Colonic mucosa (tissue), 4 donors: ENCODE measurements at regions of chr20 and their contacts with region 1.

Region 1: DNA sequence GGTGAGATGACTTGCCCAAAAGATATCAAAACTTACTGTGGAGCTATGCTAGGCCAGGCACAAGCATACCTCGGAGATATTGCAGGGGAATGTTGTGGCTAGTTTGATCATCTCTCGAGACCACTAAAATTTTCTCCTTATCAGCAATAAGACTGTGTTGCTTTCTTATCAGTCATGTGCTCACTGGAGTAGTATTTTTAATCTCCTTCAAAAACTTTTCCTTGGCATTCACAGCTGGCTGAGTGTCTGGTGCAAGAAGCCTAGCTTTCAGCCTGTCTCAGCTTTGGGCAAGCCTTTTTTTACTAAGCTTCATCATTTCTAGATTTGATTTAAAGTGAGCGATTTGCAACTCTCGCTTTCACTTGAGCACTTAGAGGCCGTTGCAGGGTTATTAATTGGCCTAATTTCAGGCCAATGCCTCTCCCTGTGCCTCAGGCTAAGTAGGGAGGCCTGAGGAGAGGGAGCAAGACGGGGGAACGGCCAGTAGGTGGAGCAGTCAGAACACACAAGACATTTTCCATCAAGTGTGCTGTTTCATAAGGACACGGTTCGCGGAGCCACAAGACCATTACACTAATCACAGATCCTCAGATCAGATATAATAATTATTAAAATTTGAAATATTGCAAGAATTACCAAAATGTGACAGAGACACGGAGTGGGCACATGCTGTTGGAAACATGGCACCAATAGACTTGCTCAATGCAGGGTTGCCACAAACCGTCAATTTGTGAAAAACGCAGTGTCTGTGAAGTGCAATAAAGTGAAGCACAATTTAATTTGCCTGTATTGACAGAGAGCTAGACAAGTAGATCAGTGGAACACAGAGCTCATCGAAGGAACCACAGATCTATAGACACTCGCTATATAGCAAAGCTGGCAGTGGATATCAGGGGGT is 106.8 kb upstream of the SIRPG start:
- DNase-seq: peak; percentile 86
- H3K4me3 ChIP-seq: no peak overlapping the region
- H3K27ac ChIP-seq: no peak overlapping the region
- H3K4me1 ChIP-seq: no peaks in the 10 kb centered on the region
- H3K27me3 ChIP-seq: no peaks in the 10 kb centered on the region
- CTCF ChIP-seq: peak; percentile 86

Region 2: DNA sequence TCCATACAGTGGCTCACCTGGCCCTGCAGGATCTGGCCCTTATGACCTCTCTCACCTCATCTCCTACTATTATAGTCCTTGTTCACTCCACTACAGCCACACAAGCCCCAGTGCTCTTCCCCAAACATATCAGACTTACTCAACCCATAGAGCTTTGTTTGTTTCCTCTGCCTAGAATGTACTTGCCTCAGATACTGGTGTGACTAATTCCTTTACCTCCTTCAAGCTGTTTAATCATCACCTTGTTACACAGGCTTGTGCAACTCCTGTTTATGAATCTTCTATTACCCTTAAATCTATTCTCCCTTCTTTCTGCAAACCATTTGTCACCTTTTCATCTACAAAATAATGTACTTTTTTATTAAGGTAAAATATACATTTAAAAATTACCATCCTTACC is 1673.7 kb before region 1 on chr20:
- intact Hi-C with region 1: no loop called
- DNase-seq: no peak
- H3K4me3 ChIP-seq: no peak overlapping the region
- H3K27ac ChIP-seq: no peak overlapping the region
- H3K4me1 ChIP-seq: no peaks in the 10 kb centered on the region
- H3K27me3 ChIP-seq: no peaks in the 10 kb centered on the region
- CTCF ChIP-seq: no peak

Region 3: DNA sequence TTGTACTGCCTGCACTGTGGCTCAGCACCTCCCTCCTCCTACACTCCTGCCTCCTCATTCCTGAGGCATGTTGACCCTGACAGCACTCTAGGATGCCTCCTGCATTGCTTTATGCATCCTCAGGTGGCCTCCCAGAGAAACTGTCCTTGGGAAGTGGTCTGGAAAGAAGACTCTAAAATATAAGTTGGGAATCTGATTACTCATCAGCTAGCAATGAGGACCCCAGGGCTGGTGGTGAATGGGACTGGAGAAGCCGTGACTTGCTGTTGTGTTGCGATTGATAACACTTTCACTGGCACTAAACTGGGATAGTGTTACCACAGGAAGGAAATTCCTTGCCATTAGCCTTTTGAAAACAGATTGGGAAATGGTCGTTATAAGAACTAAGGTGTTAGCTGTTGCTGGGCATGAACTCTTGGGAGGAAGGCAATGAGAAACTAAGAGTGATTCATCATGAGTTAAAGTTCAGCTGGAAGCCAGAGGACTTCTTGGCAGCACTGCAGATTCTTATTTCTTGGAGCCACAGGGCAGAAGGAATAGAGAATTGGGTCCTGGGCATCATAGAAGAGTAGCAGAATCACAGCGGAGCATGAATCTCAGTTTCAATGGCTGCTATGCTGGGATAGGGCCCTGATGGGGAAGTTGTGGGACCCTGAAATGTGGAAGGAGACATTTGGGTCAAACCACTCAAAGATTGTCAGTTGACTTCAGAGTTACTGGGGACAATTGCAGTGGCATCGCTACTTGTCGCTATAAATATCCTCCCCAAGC is 196.8 kb before region 1 on chr20:
- intact Hi-C with region 1: no loop called
- DNase-seq: no peak
- H3K4me3 ChIP-seq: no peak overlapping the region
- H3K27ac ChIP-seq: no peak overlapping the region
- H3K4me1 ChIP-seq: no peaks in the 10 kb centered on the region
- H3K27me3 ChIP-seq: no peaks in the 10 kb centered on the region
- CTCF ChIP-seq: no peak

Region 4: GRCh38 chr20:2093159-2093781 is 328.9 kb after region 1 on chr20:
- intact Hi-C with region 1: loop called (anchors 10 kb)
- DNase-seq: no peak
- H3K4me3 ChIP-seq: no peak overlapping the region
- H3K27ac ChIP-seq: no peak overlapping the region
- H3K4me1 ChIP-seq: no peaks in the 10 kb centered on the region
- H3K27me3 ChIP-seq: no peaks in the 10 kb centered on the region
- CTCF ChIP-seq: peak; percentile 33

Region 5: DNA sequence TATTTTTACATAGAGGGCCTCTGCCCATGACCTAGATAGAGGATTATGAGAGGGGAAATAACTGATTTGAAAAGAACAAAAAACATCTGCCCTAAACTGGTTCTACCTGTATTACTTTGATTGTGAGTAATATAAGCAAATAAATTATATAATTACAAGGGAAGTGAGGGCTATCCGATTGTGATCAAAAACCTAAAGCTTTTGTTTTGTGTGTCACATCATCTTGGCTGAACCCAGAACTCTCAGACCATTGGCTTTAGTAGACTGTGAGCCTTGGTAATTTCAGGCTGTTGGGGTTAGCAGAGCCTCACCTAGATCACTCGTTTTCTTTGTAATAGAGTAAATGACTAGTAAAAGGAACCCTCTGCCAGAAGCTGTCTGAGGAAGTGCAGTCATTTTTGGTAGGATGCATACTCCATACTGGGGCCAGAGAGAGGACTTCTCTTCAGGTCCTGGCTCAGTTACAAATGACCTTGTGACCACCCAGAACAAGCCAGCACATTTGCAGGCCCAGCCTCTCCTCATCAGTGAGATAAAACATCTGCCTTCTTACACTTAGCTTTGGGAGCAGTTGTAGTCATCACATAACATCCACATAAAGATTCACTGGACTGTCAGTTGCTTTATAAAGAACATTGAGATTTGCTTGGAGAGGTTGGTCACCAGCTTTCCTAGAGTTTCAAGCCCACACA is 350.8 kb after region 1 on chr20:
- intact Hi-C with region 1: no loop called
- DNase-seq: peak; percentile 39
- H3K4me3 ChIP-seq: no peak overlapping the region
- H3K27ac ChIP-seq: no peak overlapping the region
- H3K4me1 ChIP-seq: no peaks in the 10 kb centered on the region
- H3K27me3 ChIP-seq: no peaks in the 10 kb centered on the region
- CTCF ChIP-seq: no peak